Mammary epithelial cell (primary cell): ENCODE measurements at regions of chr22 and their contacts with region 1.

Region 1: DNA sequence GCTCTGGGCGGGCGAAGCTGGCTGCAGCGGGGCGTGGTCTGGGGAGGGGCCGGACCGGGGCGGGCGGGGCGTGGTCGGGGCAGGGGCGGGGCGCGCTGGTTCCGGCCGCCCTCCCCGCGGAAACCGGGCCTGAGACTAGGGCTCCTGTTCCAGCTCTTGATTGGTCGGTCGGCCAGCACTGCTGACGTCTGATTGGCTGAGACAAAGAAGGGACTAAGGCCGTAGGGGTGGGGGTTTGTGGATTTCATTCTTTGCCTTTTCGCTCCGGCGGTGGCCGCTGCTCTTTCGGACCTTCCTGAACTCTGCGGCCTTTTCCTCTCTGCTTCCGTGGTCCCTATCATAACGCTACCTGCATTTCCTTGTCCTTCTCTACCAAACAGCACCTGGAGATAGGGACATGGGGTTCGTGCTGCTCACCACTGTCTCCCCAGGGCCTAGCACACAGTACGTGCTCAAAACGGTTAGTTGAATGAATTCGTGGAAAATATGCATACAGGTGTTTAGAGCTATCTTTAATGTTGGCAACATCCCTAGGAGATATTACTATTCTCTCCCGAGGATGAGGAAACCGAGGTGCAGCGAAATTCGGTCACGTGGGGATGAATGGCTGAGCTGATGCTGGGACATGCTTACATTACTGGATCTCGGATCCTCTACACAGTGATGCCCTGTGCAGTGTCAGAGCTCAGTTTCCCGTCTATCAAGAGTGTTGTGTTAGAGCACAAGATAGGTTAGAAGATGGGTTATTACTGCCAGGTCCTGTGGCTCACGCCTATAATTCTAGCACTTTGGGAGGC is 62.8 kb downstream of the NFAM1 start:
- DNase-seq: peak; percentile 88
- H3K4me3 ChIP-seq: peak overlapping the region; percentile 53 to 87 (median 65)
- H3K27ac ChIP-seq: no peak overlapping the region
- H3K4me1 ChIP-seq: peaks cover 21% of the 10 kb centered on the region
- H3K27me3 ChIP-seq: peaks cover 3% of the 10 kb centered on the region
- CTCF ChIP-seq: no peak

Region 2: GRCh38 chr22:42277988-42278776 is 91.3 kb before region 1 on chr22:
- CTCF ChIA-PET with region 1: no interaction called
- dilution Hi-C with region 1: loop called (anchors 5 kb)
- in situ Hi-C with region 1: no loop called
- intact Hi-C with region 1: no loop called
- DNase-seq: no peak
- H3K4me3 ChIP-seq: no peak overlapping the region
- H3K27ac ChIP-seq: no peak overlapping the region
- H3K4me1 ChIP-seq: no peaks in the 10 kb centered on the region
- H3K27me3 ChIP-seq: no peaks in the 10 kb centered on the region
- CTCF ChIP-seq: peak in 1 of 2 donors; percentile 30

Region 3: GRCh38 chr22:42324990-42325710 is 44.3 kb before region 1 on chr22:
- CTCF ChIA-PET with region 1: no interaction called
- dilution Hi-C with region 1: loop called (anchors 5 kb)
- in situ Hi-C with region 1: no loop called
- intact Hi-C with region 1: loop called (anchors 5 kb)
- DNase-seq: no peak
- H3K4me3 ChIP-seq: no peak overlapping the region
- H3K27ac ChIP-seq: no peak overlapping the region
- H3K4me1 ChIP-seq: peaks cover 33% of the 10 kb centered on the region
- H3K27me3 ChIP-seq: no peaks in the 10 kb centered on the region
- CTCF ChIP-seq: no peak

Region 4: GRCh38 chr22:42331014-42331413 is 38.4 kb before region 1 on chr22:
- CTCF ChIA-PET with region 1: no interaction called
- dilution Hi-C with region 1: loop called (anchors 5 kb)
- in situ Hi-C with region 1: no loop called
- intact Hi-C with region 1: no loop called
- DNase-seq: no peak
- H3K4me3 ChIP-seq: no peak overlapping the region
- H3K27ac ChIP-seq: no peak overlapping the region
- H3K4me1 ChIP-seq: peaks cover 9% of the 10 kb centered on the region
- H3K27me3 ChIP-seq: no peaks in the 10 kb centered on the region
- CTCF ChIP-seq: no peak

Region 5: DNA sequence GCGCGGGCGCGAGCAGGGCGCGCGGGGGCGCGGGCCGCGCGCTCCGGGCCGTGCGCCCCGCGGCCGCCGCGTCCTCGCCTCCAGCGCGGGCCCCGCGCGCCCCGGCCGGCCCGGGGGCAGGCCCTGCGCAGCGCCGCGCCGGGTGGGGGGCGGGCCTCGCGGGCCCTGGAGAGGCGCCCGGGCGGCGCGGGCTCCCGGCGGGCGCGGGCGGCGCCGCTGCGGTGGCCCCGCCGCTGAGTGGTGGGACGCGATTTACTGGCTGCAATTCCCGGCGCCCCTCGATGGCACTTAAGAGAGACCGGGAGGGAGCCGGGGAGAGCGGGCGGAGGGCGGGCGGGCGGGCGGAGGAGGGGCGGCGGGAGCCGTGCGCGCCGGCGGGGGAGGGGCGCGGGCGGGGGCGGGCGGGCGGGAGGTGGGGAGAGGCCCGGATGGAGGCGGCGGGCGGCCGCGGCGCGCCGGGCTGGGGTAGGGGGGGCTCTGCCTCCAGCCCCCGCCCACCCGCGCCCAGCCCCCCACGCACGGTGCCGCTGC is 25.8 kb before region 1 on chr22:
- CTCF ChIA-PET with region 1: no interaction called
- dilution Hi-C with region 1: no loop called
- in situ Hi-C with region 1: no loop called
- intact Hi-C with region 1: no loop called
- DNase-seq: no peak
- H3K4me3 ChIP-seq: peak overlapping the region in 1 of 3 experiments; percentile 38
- H3K27ac ChIP-seq: no peak overlapping the region
- H3K4me1 ChIP-seq: peaks cover 5% of the 10 kb centered on the region
- H3K27me3 ChIP-seq: no peaks in the 10 kb centered on the region
- CTCF ChIP-seq: no peak